Naive thymus-derived CD4-positive, alpha-beta T cell (primary cell): ENCODE measurements at regions of chr12 and their contacts with region 1.

Region 1: GRCh38 chr12:8697476-8698131 is at the start of gene RIMKLB:
- DNase-seq: peak; percentile 59 to 75 (median 72)
- ATAC-seq: peak; percentile 93
- H3K4me3 ChIP-seq: peak within 1 kb of the TSS; percentile 79
- H3K4me3 Mint-ChIP-seq: peak within 1 kb of the TSS; percentile 89 to 95 (median 93)
- H3K27ac ChIP-seq: peak within 1 kb of the TSS; percentile 79
- H3K27ac Mint-ChIP-seq: peak within 1 kb of the TSS; percentile 65 to 94 (median 90)
- H3K4me1 ChIP-seq: peaks cover 0 to 17% of the 10 kb centered on the region in 2 donors
- H3K4me1 Mint-ChIP-seq: peaks cover 11 to 44% (median 42%) of the 10 kb centered on the region in 7 donors
- H3K27me3 ChIP-seq: no peaks in the 10 kb centered on the region
- H3K27me3 Mint-ChIP-seq: peaks cover 0 to 64% (median 0%) of the 10 kb centered on the region in 5 donors
- total RNA-seq, gene RIMKLB: 1.8 to 31.3 (median 18.2) TPM

Region 2: DNA sequence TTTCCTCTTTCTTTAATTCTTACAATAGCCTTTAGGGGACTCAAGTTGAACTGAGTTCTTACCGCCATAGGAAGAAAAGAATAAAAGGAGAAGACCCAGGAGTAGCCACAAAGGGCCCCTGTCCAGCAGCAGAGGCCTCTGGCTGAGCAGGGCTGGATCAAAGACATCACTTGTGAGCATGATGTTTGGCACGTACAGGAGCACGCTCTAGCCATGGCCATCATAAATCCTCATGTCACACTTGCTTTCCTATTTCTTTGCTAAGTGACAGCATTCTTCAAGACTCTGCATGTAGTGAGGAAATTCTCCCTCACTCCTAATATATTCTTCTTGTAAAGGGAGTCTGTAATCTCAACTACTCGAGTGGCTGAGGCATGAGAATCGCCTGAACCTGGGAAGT is 966.1 kb before region 1 on chr12:
- CTCF ChIA-PET with region 1: no interaction called
- POLR2A ChIA-PET with region 1: no interaction called
- intact Hi-C with region 1: no loop called
- DNase-seq: no peak
- ATAC-seq: no peak
- H3K4me3 ChIP-seq: no peak overlapping the region
- H3K4me3 Mint-ChIP-seq: no peak overlapping the region
- H3K27ac ChIP-seq: no peak overlapping the region
- H3K27ac Mint-ChIP-seq: no peak overlapping the region
- H3K4me1 ChIP-seq: no peaks in the 10 kb centered on the region
- H3K4me1 Mint-ChIP-seq: no peaks in the 10 kb centered on the region
- H3K27me3 ChIP-seq: no peaks in the 10 kb centered on the region
- H3K27me3 Mint-ChIP-seq: peaks cover 0 to 4% (median 0%) of the 10 kb centered on the region in 5 donors

Region 3: GRCh38 chr12:8032242-8033152 is 665.1 kb before region 1 on chr12 and contains the start of gene FOXJ2:
- CTCF ChIA-PET with region 1: no interaction called
- POLR2A ChIA-PET with region 1: no interaction called
- intact Hi-C with region 1: loop called in 1 of 2 experiments (anchors 5 kb)
- DNase-seq: peak; percentile 68 to 83 (median 78)
- ATAC-seq: peak; percentile 94
- H3K4me3 ChIP-seq: peak within 1 kb of the TSS; percentile 88
- H3K4me3 Mint-ChIP-seq: peak within 1 kb of the TSS; percentile 71 to 94 (median 91)
- H3K27ac ChIP-seq: peak within 1 kb of the TSS; percentile 100
- H3K27ac Mint-ChIP-seq: peak within 1 kb of the TSS; percentile 77 to 98 (median 94)
- H3K4me1 ChIP-seq: peaks cover 41 to 43% of the 10 kb centered on the region in 2 donors
- H3K4me1 Mint-ChIP-seq: peaks cover 49 to 63% (median 51%) of the 10 kb centered on the region in 7 donors
- H3K27me3 ChIP-seq: no peaks in the 10 kb centered on the region
- H3K27me3 Mint-ChIP-seq: peaks cover 0 to 2% (median 0%) of the 10 kb centered on the region in 5 donors
- total RNA-seq, gene FOXJ2: 19.8 to 30.2 (median 28.9) TPM

Region 4: DNA sequence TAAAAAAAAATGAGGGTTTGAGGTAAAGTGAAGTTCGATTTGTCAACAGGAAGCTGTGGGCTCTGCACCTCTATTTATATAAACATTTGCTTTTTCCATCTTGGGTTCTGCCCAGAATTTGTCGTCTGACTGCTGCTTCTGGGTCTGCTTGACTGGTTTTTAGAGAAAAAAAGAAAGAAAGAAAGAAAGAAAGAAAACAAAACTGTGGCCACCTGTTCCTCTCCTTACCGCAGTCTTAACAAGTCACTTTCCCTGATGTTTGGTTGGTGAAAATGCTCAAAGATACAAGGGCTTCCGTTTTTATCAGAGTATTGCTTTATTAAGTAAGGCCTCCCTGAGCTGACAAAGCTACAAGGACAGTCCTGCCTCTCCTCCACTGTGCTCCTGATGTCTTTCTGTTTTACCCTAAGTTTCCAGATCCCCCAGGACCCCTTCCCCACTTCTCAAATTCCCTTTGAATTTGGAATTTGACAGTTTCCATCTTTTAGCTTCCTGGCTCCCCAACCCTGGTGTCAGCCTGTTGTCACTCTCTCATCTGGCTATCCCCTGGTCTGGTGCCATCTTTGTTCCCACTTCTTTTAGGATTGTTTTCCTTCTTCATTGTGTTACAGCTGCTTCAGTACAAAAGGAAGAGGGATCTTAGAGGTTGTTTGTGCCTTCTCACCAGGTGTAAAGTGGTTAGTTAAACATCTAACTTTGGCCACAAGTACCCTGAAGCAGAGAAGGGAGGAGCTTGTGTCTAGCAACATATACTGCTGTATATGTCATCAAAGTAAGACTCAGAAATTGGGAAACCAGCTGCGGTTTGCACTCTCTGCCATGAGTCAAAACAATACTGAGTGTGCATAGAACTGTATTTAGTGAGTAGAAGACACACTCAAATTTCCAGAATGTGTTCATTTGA is 53.0 kb before region 1 on chr12:
- CTCF ChIA-PET with region 1: no interaction called
- POLR2A ChIA-PET with region 1: no interaction called
- intact Hi-C with region 1: loop called (anchors 5 kb)
- DNase-seq: peak in 7 of 9 donors; percentile 11 to 51 (median 31)
- ATAC-seq: peak; percentile 84
- H3K4me3 ChIP-seq: peak overlapping the region; percentile 34
- H3K4me3 Mint-ChIP-seq: peak overlapping the region; percentile 49 to 88 (median 74)
- H3K27ac ChIP-seq: peak overlapping the region; percentile 61
- H3K27ac Mint-ChIP-seq: peak overlapping the region; percentile 90 to 95 (median 94)
- H3K4me1 ChIP-seq: peaks cover 22 to 33% of the 10 kb centered on the region in 2 donors
- H3K4me1 Mint-ChIP-seq: peaks cover 15 to 45% (median 26%) of the 10 kb centered on the region in 7 donors
- H3K27me3 ChIP-seq: no peaks in the 10 kb centered on the region
- H3K27me3 Mint-ChIP-seq: peaks cover 0 to 67% (median 0%) of the 10 kb centered on the region in 5 donors

Region 5: GRCh38 chr12:8681041-8681902 is 16.3 kb before region 1 on chr12:
- CTCF ChIA-PET with region 1: interaction called, 6 read pairs
- POLR2A ChIA-PET with region 1: interaction called, 4 read pairs
- intact Hi-C with region 1: loop called in 1 of 2 experiments (anchors 1 kb)
- DNase-seq: no peak
- ATAC-seq: no peak
- H3K4me3 ChIP-seq: no peak overlapping the region
- H3K4me3 Mint-ChIP-seq: no peak overlapping the region
- H3K27ac ChIP-seq: no peak overlapping the region
- H3K27ac Mint-ChIP-seq: no peak overlapping the region
- H3K4me1 ChIP-seq: no peaks in the 10 kb centered on the region
- H3K4me1 Mint-ChIP-seq: peaks cover 0 to 5% (median 0%) of the 10 kb centered on the region in 7 donors
- H3K27me3 ChIP-seq: no peaks in the 10 kb centered on the region
- H3K27me3 Mint-ChIP-seq: peaks cover 0 to 14% (median 0%) of the 10 kb centered on the region in 5 donors

Region 6: DNA sequence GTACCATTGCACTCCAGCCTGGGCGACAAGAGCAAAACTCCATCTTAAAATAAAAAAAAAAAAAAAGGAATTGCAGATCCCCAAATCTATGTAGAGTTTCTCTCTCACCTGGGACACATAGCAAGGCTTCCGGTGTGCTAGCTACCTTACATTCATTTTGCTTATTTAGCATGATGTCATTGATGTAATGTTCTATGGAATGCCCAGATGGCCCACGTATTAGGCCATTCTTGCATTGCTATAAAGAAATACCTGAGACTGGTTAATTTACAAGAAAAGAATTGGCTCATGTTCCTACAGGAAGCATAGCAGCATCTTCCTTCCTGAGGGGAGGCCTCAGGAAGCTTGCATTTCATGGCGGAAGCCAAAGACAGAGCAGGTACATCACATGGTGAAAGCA is 87.9 kb after region 1 on chr12:
- CTCF ChIA-PET with region 1: no interaction called
- POLR2A ChIA-PET with region 1: no interaction called
- intact Hi-C with region 1: no loop called
- DNase-seq: no peak
- ATAC-seq: no peak
- H3K4me3 ChIP-seq: no peak overlapping the region
- H3K4me3 Mint-ChIP-seq: no peak overlapping the region
- H3K27ac ChIP-seq: no peak overlapping the region
- H3K27ac Mint-ChIP-seq: no peak overlapping the region
- H3K4me1 ChIP-seq: no peaks in the 10 kb centered on the region
- H3K4me1 Mint-ChIP-seq: peaks cover 0 to 7% (median 0%) of the 10 kb centered on the region in 7 donors
- H3K27me3 ChIP-seq: no peaks in the 10 kb centered on the region
- H3K27me3 Mint-ChIP-seq: peaks cover 0 to 3% (median 0%) of the 10 kb centered on the region in 5 donors

Region 7: GRCh38 chr12:8890313-8891085 is 192.9 kb after region 1 on chr12:
- CTCF ChIA-PET with region 1: no interaction called
- POLR2A ChIA-PET with region 1: interaction called, 3 read pairs
- intact Hi-C with region 1: loop called in 1 of 2 experiments (anchors 5 kb)
- DNase-seq: peak; percentile 29 to 78 (median 61)
- ATAC-seq: peak; percentile 91
- H3K4me3 ChIP-seq: peak overlapping the region; percentile 71
- H3K4me3 Mint-ChIP-seq: peak overlapping the region; percentile 77 to 100 (median 90)
- H3K27ac ChIP-seq: peak overlapping the region; percentile 59
- H3K27ac Mint-ChIP-seq: peak overlapping the region in 8 of 9 donors; percentile 8 to 92 (median 80)
- H3K4me1 ChIP-seq: no peaks in the 10 kb centered on the region
- H3K4me1 Mint-ChIP-seq: peaks cover 0 to 12% (median 5%) of the 10 kb centered on the region in 7 donors
- H3K27me3 ChIP-seq: no peaks in the 10 kb centered on the region
- H3K27me3 Mint-ChIP-seq: peaks cover 0 to 27% (median 0%) of the 10 kb centered on the region in 5 donors

Region 8: DNA sequence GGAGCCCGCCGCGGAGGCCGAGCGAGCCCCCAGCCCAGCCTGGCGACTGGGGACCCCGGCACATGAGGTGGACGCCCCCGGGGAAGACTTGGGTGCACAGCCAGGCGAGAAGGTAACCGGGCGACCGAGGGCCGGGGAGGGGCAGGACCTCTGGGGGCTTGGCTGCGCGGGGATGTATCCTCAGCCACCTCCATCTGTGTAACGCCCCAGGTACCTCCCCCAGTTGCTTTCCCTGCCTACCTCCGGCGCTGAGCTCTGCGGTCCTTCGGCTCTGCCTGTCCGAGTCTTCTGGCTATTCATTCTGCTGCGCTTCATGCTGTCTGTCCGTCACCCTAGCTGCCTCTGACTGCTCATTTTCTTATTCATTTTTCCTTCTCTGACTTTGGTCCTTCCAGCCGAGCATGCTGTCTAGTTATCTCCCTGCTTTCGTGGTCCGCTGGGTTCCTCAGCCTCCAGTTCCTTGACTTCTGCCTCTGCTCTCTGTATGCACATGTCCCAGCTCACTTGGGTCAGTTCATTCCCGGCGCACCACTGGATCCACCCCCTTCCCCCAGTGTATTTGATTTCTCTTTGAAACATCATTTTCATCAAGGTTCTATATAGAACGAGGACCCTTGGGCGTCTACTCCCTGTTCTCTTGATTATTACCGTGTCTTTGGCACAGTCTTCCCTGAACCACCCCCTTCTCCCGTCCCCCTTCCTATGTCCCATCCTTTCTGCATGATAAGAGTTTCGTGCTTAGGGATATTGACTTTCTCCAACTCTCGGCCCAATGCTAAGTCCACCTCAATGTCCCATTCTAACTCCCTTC is 217.3 kb after region 1 on chr12:
- CTCF ChIA-PET with region 1: no interaction called
- POLR2A ChIA-PET with region 1: no interaction called
- intact Hi-C with region 1: loop called in 1 of 2 experiments (anchors 1 kb)
- DNase-seq: peak; percentile 37 to 68 (median 60)
- ATAC-seq: peak; percentile 83
- H3K4me3 ChIP-seq: peak overlapping the region; percentile 73
- H3K4me3 Mint-ChIP-seq: no peak overlapping the region
- H3K27ac ChIP-seq: peak overlapping the region; percentile 79
- H3K27ac Mint-ChIP-seq: no peak overlapping the region
- H3K4me1 ChIP-seq: peaks cover 14 to 25% of the 10 kb centered on the region in 2 donors
- H3K4me1 Mint-ChIP-seq: peaks cover 7 to 20% (median 16%) of the 10 kb centered on the region in 7 donors
- H3K27me3 ChIP-seq: no peaks in the 10 kb centered on the region
- H3K27me3 Mint-ChIP-seq: peaks cover 0 to 16% (median 0%) of the 10 kb centered on the region in 5 donors

Region 9: GRCh38 chr12:10613349-10614055 is 1915.9 kb after region 1 on chr12 and contains the start of gene MAGOHB:
- CTCF ChIA-PET with region 1: no interaction called
- POLR2A ChIA-PET with region 1: no interaction called
- intact Hi-C with region 1: loop called in 1 of 2 experiments (anchors 10 kb)
- DNase-seq: peak; percentile 94 to 100 (median 97)
- ATAC-seq: peak; percentile 96
- H3K4me3 ChIP-seq: peak within 1 kb of the TSS; percentile 74
- H3K4me3 Mint-ChIP-seq: peak within 1 kb of the TSS; percentile 93 to 100 (median 98)
- H3K27ac ChIP-seq: peak within 1 kb of the TSS; percentile 93
- H3K27ac Mint-ChIP-seq: peak within 1 kb of the TSS; percentile 97 to 100 (median 100)
- H3K4me1 ChIP-seq: peaks cover 4 to 11% of the 10 kb centered on the region in 2 donors
- H3K4me1 Mint-ChIP-seq: peaks cover 12 to 38% (median 33%) of the 10 kb centered on the region in 7 donors
- H3K27me3 ChIP-seq: no peaks in the 10 kb centered on the region
- H3K27me3 Mint-ChIP-seq: peaks cover 0 to 26% (median 7%) of the 10 kb centered on the region in 5 donors
- total RNA-seq, gene MAGOHB: 12.1 to 43.1 (median 24.8) TPM